Caco-2 (cell line): ENCODE measurements at regions of chr2 and their contacts with region 1.

Region 1: GRCh38 chr2:161273038-161273760 is 35.0 kb upstream of the PSMD14 start:
- DNase-seq: peak in 1 of 2 experiments; percentile 66
- H3K4me3 ChIP-seq: no peak overlapping the region
- H3K4me3 Mint-ChIP-seq: no peak overlapping the region
- H3K27ac Mint-ChIP-seq: no peak overlapping the region
- H3K4me1 ChIP-seq: no peaks in the 10 kb centered on the region
- H3K4me1 Mint-ChIP-seq: no peaks in the 10 kb centered on the region
- H3K27me3 ChIP-seq: no peaks in the 10 kb centered on the region
- H3K27me3 Mint-ChIP-seq: peaks cover 3% of the 10 kb centered on the region
- CTCF ChIP-seq: peak; percentile 56 to 70

Region 2: DNA sequence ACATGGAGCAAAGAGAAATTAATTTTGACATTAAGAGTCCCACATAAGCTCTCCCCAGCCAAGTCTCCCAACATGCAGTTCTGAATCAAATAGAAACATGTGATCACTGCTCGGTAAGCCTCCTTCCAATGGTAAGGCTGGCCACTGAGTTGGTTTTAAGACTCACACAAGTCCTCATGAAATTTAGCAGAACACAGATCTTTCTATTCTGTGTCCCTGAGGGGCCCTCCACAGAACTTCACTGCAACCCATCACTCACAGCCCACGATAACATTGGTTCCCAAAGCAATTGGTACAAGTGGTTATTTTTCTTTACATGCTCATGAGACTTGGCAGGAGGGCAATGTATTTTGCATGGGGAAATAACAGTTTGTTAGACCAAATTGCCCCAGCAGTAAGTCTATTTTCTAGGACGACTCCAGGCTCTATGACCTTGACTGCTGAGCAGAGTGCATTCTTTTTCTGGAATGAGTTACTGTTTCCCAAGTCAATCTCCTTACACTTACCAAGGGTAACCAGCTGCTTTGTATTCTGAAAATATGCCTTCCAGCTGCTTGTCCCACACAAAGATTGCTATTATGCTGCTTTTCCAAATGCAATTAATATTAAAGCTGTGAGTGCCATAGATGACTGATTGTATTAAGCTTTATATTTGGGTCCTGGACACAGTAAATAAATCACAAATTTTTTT is 255.3 kb before region 1 on chr2:
- CTCF ChIA-PET with region 1: no interaction called
- POLR2A ChIA-PET with region 1: no interaction called
- intact Hi-C with region 1: no loop called
- DNase-seq: no peak
- H3K4me3 ChIP-seq: no peak overlapping the region
- H3K4me3 Mint-ChIP-seq: no peak overlapping the region
- H3K27ac Mint-ChIP-seq: no peak overlapping the region
- H3K4me1 ChIP-seq: no peaks in the 10 kb centered on the region
- H3K4me1 Mint-ChIP-seq: no peaks in the 10 kb centered on the region
- H3K27me3 ChIP-seq: no peaks in the 10 kb centered on the region
- H3K27me3 Mint-ChIP-seq: peaks cover 4% of the 10 kb centered on the region
- CTCF ChIP-seq: no peak

Region 3: GRCh38 chr2:161223139-161223732 is 50.0 kb before region 1 on chr2:
- CTCF ChIA-PET with region 1: no interaction called
- POLR2A ChIA-PET with region 1: no interaction called
- intact Hi-C with region 1: loop called (anchors 1 kb)
- DNase-seq: peak in 1 of 2 experiments; percentile 49
- H3K4me3 ChIP-seq: no peak overlapping the region
- H3K4me3 Mint-ChIP-seq: no peak overlapping the region
- H3K27ac Mint-ChIP-seq: no peak overlapping the region
- H3K4me1 ChIP-seq: no peaks in the 10 kb centered on the region
- H3K4me1 Mint-ChIP-seq: peaks cover 7% of the 10 kb centered on the region
- H3K27me3 ChIP-seq: no peaks in the 10 kb centered on the region
- H3K27me3 Mint-ChIP-seq: no peaks in the 10 kb centered on the region
- CTCF ChIP-seq: peak; percentile 59 to 78

Region 4: DNA sequence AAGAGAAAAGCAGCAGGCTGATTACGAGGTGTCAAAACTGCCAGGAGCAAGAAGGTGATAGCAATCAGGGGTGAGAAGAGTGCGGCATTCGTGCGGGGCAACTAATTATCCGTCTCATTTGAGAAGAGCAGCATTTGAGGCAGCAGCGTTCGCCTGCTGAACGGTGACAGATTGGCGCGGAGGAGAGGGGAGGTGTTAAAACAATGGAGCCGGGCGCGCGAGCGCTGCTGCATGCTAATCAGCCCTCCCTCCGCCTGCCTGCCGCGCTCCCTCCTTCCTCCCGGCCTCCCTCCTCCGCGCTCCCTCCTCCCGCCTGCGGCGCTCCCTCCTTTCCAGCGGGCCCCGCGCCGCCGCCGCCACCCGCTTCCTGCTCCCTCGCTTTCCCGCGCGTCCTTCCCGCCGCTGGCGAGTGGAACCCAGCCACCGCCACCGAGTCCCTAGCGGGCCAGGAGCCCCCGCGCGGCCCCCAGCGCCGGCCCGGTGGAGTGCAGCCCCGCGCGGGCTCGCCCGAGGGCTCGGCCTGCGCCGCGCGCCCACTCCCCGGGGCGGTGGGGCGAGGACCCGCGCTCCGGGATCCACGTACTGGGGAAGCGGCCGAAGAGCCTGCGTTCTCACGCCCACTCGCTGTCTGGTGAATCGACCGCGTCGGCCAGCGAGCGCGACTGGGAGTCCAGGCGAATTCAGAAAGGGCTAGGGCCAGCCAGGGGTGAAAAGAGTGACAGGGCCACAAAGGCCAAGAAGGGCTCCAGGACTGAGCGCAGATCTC is 34.5 kb before region 1 on chr2:
- CTCF ChIA-PET with region 1: no interaction called
- POLR2A ChIA-PET with region 1: no interaction called
- intact Hi-C with region 1: loop called (anchors 5 kb)
- DNase-seq: peak; percentile 52 to 54
- H3K4me3 ChIP-seq: peak overlapping the region; percentile 60
- H3K4me3 Mint-ChIP-seq: peak overlapping the region; percentile 88
- H3K27ac Mint-ChIP-seq: peak overlapping the region; percentile 59
- H3K4me1 ChIP-seq: peaks cover 2% of the 10 kb centered on the region; the same call in 1 of the 2 replicates
- H3K4me1 Mint-ChIP-seq: no peaks in the 10 kb centered on the region
- H3K27me3 ChIP-seq: no peaks in the 10 kb centered on the region
- H3K27me3 Mint-ChIP-seq: no peaks in the 10 kb centered on the region
- CTCF ChIP-seq: no peak

Region 5: GRCh38 chr2:161250864-161251436 is 22.2 kb before region 1 on chr2:
- CTCF ChIA-PET with region 1: no interaction called
- POLR2A ChIA-PET with region 1: no interaction called
- intact Hi-C with region 1: loop called (anchors 1 kb)
- DNase-seq: peak in 1 of 2 experiments; percentile 68
- H3K4me3 ChIP-seq: no peak overlapping the region
- H3K4me3 Mint-ChIP-seq: no peak overlapping the region
- H3K27ac Mint-ChIP-seq: no peak overlapping the region
- H3K4me1 ChIP-seq: no peaks in the 10 kb centered on the region
- H3K4me1 Mint-ChIP-seq: no peaks in the 10 kb centered on the region
- H3K27me3 ChIP-seq: no peaks in the 10 kb centered on the region
- H3K27me3 Mint-ChIP-seq: no peaks in the 10 kb centered on the region
- CTCF ChIP-seq: peak; percentile 63 to 77